ENCODE measurements at regions of chr9 and their contacts with region 1.

Region 1: DNA sequence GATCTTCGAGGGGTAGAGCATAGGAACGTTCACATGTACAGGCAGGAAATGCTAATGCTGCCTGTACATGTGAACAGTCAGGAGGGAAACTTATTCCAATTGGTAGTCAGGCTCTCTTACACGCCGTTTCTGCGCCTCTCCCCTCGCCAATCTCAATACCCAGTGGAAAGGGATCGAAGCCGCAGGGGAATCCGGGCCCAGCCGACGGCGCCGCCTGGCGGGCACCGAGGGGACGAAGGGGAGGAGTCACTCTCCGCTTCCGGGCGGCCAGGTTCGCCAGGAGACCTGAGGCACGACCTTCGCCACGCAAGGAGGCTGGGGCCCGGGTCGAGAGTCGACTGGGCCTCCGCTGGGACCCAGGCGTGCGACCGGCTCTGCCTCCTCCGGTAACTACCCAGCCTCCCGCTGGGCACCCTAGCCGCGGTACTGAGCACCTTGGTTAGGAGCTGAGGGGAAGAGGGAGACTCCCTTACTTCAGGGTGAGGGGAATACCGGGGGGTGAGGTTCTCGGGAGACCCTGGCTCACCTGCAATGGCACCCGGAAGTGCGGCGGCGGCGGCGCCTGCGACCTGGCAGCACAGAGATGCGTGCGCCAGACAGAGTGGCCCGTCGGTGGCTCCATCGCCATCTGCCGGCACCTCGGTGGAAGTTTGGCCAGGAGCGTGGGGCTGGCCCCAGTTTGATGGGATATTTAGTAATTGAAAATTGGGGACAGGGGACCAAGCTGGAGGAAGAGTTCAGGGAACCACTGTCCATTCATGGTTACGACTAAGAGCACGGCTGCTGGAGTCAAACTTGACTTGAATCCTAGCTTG is at the start of gene PIGO:
- DNase-seq: peak; percentile 85
- H3K4me3 Mint-ChIP-seq: peak within 1 kb of the TSS; percentile 85
- H3K27ac Mint-ChIP-seq: peak within 1 kb of the TSS; percentile 88
- H3K4me1 Mint-ChIP-seq: peaks cover 19% of the 10 kb centered on the region
- H3K27me3 Mint-ChIP-seq: no peaks in the 10 kb centered on the region
- total RNA-seq, gene PIGO: 33.0 and 37.8 TPM in 2 replicates

Region 2: DNA sequence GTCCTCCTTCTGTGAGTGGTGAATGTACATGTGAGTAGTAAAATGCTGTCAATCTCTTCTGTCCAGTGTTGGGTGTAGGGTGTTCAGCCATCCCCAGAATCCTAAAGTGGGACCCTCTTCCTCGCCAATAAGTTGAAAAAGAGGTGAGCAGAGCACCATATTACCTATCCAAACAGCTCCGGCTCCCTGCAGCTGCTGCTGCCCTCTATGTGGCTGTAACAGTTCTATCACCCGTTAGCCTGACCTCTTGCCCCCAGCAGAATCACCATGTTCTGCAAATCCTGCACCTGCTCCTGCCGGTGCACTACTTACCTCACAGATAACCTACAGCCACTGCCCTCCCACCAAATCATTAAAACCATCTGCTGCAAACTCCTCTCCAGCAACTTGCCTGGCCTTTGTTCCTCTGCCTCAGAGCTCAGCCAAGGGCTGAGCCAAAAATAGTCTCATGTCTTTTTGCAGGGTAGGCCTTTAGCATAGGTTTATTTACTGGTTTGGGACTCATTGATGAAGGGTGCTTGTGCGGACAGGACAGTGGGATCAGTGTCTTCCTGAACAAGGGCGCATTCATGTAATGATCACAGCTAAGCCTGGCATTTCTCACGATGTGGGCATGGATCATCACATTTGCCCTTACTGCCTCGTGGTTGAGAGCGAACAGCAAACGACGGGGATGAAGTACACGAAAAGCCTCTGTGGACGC is 336.7 kb before region 1 on chr9:
- intact Hi-C with region 1: loop called (anchors 5 kb)
- DNase-seq: no peak
- H3K4me3 Mint-ChIP-seq: no peak overlapping the region
- H3K27ac Mint-ChIP-seq: no peak overlapping the region
- H3K4me1 Mint-ChIP-seq: peaks cover 5% of the 10 kb centered on the region
- H3K27me3 Mint-ChIP-seq: peaks cover 23% of the 10 kb centered on the region

Region 3: GRCh38 chr9:34989003-34989945 is 107.0 kb before region 1 on chr9 and contains the start of gene DNAJB5:
- intact Hi-C with region 1: loop called (anchors 2 kb)
- DNase-seq: peak; percentile 98
- H3K4me3 Mint-ChIP-seq: peak within 1 kb of the TSS; percentile 92
- H3K27ac Mint-ChIP-seq: peak within 1 kb of the TSS; percentile 87
- H3K4me1 Mint-ChIP-seq: peaks cover 62% of the 10 kb centered on the region
- H3K27me3 Mint-ChIP-seq: no peaks in the 10 kb centered on the region
- total RNA-seq, gene DNAJB5: 7.5 and 11.3 TPM in 2 replicates

Region 4: GRCh38 chr9:35079426-35080341 is 16.6 kb before region 1 on chr9 and contains the start of gene FANCG:
- intact Hi-C with region 1: loop called (anchors 1 kb)
- DNase-seq: peak; percentile 86
- H3K4me3 Mint-ChIP-seq: peak within 1 kb of the TSS; percentile 96
- H3K27ac Mint-ChIP-seq: peak within 1 kb of the TSS; percentile 97
- H3K4me1 Mint-ChIP-seq: peaks cover 27% of the 10 kb centered on the region
- H3K27me3 Mint-ChIP-seq: no peaks in the 10 kb centered on the region
- total RNA-seq, gene FANCG: 102 and 107 TPM in 2 replicates

Measured in activated T-helper 2 cell treated with anti-CD3 and anti-CD28 coated beads, Interferon-gamma antibody, Interleukin-2, Interleukin-4, amounts not matched to agents 10 μg/mL and 5 μg/mL and 100 μg/mL, durations not matched to agents 14 hours and 24 hours and 36 hours (primary cell).